Activated naive CD4-positive, alpha-beta T cell treated with anti-CD3 and anti-CD28 coated beads, Interleukin-2, amount 10 ng/mL, durations not matched to agents 7 days and 5 days (primary cell): ENCODE measurements at regions of chr3 and their contacts with region 1.

Region 1: GRCh38 chr3:46078712-46079400 is 51.6 kb upstream of the XCR1 start:
- DNase-seq: peak; percentile 94
- H3K4me3 Mint-ChIP-seq: no peak overlapping the region
- H3K27ac Mint-ChIP-seq: no peak overlapping the region
- H3K4me1 Mint-ChIP-seq: peaks cover 14% of the 10 kb centered on the region
- H3K27me3 Mint-ChIP-seq: peaks cover 15% of the 10 kb centered on the region

Region 2: GRCh38 chr3:45623393-45623792 is 455.5 kb before region 1 on chr3:
- CTCF ChIA-PET with region 1: no interaction called
- DNase-seq: no peak
- H3K4me3 Mint-ChIP-seq: no peak overlapping the region
- H3K27ac Mint-ChIP-seq: no peak overlapping the region
- H3K4me1 Mint-ChIP-seq: no peaks in the 10 kb centered on the region
- H3K27me3 Mint-ChIP-seq: no peaks in the 10 kb centered on the region

Region 3: DNA sequence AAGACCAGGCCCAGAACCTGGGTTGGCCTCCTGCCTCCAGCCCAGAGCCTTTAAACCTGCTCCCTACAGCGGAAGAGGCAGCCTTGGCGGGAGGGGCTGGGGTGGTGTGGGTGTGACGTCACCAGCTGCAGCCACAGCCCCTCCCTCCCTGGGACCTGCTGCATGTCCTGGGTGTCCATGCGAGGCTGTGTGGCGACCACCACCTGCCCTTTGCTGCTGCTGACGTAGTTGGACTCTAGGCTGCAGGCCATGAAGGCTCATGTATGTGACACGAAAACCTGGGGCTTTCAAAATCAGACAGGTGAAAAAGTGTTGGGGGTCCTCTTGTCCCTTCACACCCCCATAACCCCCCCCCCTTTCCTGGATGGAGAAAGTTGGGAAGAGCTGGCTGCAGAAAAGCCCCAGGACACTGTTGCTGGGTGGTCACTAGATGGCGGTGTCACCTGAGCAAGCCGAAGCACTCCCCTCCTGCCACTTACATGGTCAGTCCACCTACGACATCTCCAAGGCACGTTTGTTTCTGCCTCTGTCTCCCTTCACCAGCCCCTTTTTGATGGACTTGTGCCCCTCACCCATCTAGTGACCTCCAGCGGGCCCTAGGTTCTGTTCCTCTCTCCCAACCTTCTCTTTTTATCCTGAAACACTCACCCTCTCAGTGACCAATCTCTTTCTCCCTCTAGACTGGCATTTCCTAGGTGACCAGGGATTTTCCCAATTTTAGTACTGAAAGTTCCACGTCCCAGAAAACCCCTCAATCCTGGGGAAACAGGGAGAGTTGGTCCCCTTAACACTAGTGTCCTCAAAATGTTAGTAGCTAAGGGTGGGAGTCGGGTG is 317.8 kb before region 1 on chr3:
- CTCF ChIA-PET with region 1: interaction called, 49 read pairs
- DNase-seq: peak; percentile 61
- H3K4me3 Mint-ChIP-seq: no peak overlapping the region
- H3K27ac Mint-ChIP-seq: no peak overlapping the region
- H3K4me1 Mint-ChIP-seq: peaks cover 2% of the 10 kb centered on the region
- H3K27me3 Mint-ChIP-seq: peaks cover 54% of the 10 kb centered on the region

Region 4: DNA sequence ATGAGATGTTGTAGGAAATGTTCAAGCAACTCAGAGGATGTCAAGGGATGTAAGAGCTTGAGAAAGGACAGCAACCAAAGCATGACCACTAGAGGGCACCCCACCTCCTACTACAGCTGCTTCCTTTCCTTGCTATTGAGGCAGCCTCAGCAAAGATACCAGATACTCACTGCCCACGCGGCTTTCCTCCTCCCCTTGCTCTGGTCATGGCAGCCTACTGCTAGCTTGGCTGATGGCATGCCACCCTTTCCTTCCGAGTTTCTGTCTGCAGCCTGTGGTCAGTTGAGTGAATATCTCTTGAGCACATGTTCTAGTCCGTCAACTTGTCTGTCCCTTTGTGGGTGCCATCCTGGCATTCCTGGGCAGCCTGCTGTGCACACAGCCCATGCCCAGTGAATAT is 140.0 kb before region 1 on chr3:
- CTCF ChIA-PET with region 1: interaction called, 419 read pairs
- DNase-seq: peak; percentile 92
- H3K4me3 Mint-ChIP-seq: no peak overlapping the region
- H3K27ac Mint-ChIP-seq: no peak overlapping the region
- H3K4me1 Mint-ChIP-seq: peaks cover 38% of the 10 kb centered on the region
- H3K27me3 Mint-ChIP-seq: peaks cover 7% of the 10 kb centered on the region

Region 5: DNA sequence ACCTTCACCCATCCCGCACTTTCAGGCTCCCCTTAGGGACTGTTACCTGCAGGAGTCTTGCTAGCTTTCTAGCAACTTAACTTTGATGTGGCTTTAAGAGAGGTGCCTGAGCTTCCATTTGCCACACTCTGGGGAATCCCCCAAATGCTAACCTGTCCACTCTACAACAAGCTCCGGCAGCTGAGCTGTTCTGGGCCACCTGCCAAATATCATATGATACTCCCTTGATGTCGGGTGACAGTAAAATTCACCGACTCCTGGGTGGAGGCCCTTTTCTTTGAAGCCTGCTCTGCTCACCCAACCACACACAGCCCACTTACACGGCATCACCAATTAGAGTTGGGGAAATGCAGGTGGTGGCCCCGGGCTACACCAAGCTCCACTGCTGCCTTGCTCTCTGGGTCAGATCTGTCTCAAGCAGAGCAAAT is 13.5 kb before region 1 on chr3:
- CTCF ChIA-PET with region 1: interaction called, 63 read pairs
- DNase-seq: peak; percentile 85
- H3K4me3 Mint-ChIP-seq: peak overlapping the region; percentile 29
- H3K27ac Mint-ChIP-seq: peak overlapping the region; percentile 61
- H3K4me1 Mint-ChIP-seq: peaks cover 62% of the 10 kb centered on the region
- H3K27me3 Mint-ChIP-seq: peaks cover 78% of the 10 kb centered on the region

Region 6: DNA sequence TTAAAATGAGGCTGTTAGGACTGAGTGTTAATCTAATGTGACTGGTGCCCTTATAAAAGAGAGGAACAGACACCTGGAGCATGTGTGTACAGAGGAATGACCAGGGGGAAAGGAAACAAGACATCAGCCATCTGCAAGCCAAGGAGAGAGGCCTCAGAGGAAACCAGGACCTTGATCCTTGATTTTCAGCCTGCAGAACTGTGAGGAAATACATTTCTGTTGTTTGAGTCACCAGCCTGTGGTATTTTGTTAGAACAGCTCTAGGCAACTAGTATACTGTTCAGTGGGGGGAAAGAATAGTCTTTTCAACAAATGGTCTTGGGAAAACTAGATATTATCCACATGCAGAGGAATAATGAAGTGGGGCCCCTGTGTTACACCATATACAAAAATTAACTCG is 48.6 kb after region 1 on chr3:
- CTCF ChIA-PET with region 1: no interaction called
- DNase-seq: no peak
- H3K4me3 Mint-ChIP-seq: no peak overlapping the region
- H3K27ac Mint-ChIP-seq: no peak overlapping the region
- H3K4me1 Mint-ChIP-seq: peaks cover 27% of the 10 kb centered on the region
- H3K27me3 Mint-ChIP-seq: peaks cover 39% of the 10 kb centered on the region

Region 7: DNA sequence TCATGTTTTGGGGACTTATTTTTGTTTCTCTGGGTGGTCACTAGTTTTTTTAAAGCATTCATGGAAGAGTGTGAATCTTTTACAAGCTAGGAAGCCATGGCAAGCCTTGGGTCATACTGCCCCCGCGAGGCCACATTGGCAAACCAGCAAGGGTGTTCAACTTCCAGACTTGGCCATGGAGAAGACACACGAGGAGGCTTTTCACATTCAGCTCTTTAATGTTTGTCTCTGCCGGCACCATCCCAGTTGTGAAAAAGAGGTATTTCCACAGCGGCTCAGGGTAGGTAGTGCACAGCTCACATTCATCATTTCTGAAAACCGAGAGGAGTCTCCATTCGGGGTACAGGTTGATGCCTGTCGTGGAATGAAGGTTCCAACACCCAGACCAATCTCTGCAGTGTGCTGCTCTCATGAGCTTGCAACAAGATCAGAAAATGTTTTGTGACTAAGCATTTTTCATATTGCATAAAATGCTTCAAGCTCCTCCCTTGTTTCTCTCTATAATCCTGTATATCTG is 299.6 kb after region 1 on chr3:
- CTCF ChIA-PET with region 1: interaction called, 92 read pairs
- DNase-seq: peak; percentile 81
- H3K4me3 Mint-ChIP-seq: no peak overlapping the region
- H3K27ac Mint-ChIP-seq: no peak overlapping the region
- H3K4me1 Mint-ChIP-seq: peaks cover 65% of the 10 kb centered on the region
- H3K27me3 Mint-ChIP-seq: peaks cover 15% of the 10 kb centered on the region